ENCODE measurements at regions of chr17 and their contacts with region 1.

Region 1: DNA sequence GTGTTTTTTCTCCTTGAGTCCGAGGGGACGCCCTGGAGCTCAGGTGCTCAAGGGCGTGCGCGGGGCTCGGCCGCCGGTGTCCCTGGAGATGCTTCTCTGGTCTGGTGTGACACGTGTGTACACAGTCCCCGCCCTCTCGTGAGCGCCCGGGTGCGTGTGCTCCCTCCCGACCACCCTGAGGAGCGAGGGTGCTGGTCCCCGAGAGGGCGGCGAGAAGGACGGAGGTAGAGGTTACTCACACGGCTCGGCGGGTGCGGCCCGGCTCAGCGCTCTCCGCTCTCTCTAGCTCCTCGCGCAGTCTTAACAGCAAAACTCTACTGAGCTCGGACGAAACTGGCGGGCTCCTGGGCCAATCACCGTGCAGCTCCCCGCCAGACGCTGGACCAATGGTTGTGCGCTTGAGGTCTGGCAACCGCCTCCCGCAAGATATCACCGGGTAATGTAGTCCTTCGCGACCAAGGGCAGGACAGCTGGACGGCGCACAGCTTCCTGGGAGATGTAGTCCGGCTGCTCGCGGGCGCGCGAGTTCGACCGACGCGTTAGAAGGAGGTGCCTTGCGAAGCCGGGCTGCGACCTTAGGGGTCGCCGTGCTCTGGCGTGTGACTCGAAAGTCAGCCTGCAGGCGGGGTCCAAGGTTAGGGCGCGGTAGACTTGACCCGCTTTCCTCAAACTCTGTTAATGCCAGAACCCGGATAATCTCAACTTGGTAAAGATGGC is at the start of gene SLC25A19:
- DNase-seq: peak; percentile 98 to 99 (median 98)
- ATAC-seq: peak; percentile 99
- H3K4me3 ChIP-seq: peak within 1 kb of the TSS; percentile 87
- H3K27ac ChIP-seq: peak within 1 kb of the TSS; percentile 89
- H3K4me1 ChIP-seq: peaks cover 2 to 16% of the 10 kb centered on the region in 2 experiments; a peak in 2 of 5 replicates
- H3K27me3 ChIP-seq: no peaks in the 10 kb centered on the region
- CTCF ChIP-seq: peak; percentile 78 to 96 (median 85)
- EP300 ChIP-seq: no peak
- POLR2A ChIP-seq: peak; percentile 92
- RAD21 ChIP-seq: peak in 1 of 2 experiments; percentile 60; a peak in 3 of 4 replicates
- polyA plus RNA-seq, gene SLC25A19: 33.4 to 49.3 TPM

Region 2: GRCh38 chr17:75219815-75220214 is 69.5 kb before region 1 on chr17:
- CTCF ChIA-PET with region 1: no interaction called
- POLR2A ChIA-PET with region 1: no interaction called
- in situ Hi-C with region 1: no loop called
- intact Hi-C with region 1: no loop called
- DNase-seq: peak in 3 of 4 experiments; percentile 11 to 20 (median 20)
- ATAC-seq: peak; percentile 54
- H3K4me3 ChIP-seq: no peak overlapping the region
- H3K27ac ChIP-seq: no peak overlapping the region
- H3K4me1 ChIP-seq: no peaks in the 10 kb centered on the region
- H3K27me3 ChIP-seq: no peaks in the 10 kb centered on the region
- CTCF ChIP-seq: no peak
- EP300 ChIP-seq: no peak
- POLR2A ChIP-seq: 0 out of 2 replicates have a peak, but pooled peaks have one; percentile 21
- RAD21 ChIP-seq: no peak

Region 3: GRCh38 chr17:75261336-75262111 is 27.7 kb before region 1 on chr17 and contains the starts of genes GGA3 and MRPS7:
- CTCF ChIA-PET with region 1: no interaction called
- POLR2A ChIA-PET with region 1: interaction called, 12 read pairs
- in situ Hi-C with region 1: no loop called
- intact Hi-C with region 1: no loop called
- DNase-seq: peak; percentile 86 to 97 (median 94)
- ATAC-seq: peak; percentile 96
- H3K4me3 ChIP-seq: peak within 1 kb of the TSS; percentile 91
- H3K27ac ChIP-seq: peak within 1 kb of the TSS; percentile 93
- H3K4me1 ChIP-seq: peaks cover 20 to 23% of the 10 kb centered on the region in 2 experiments; a peak in 4 of 5 replicates
- H3K27me3 ChIP-seq: no peaks in the 10 kb centered on the region
- CTCF ChIP-seq: peak in 1 of 3 experiments; percentile 14; a peak in 2 of 6 replicates
- EP300 ChIP-seq: no peak
- POLR2A ChIP-seq: peak; percentile 95
- RAD21 ChIP-seq: 0 out of 4 replicates have a peak, but pooled peaks have one; percentile 2 to 16
- polyA plus RNA-seq, gene GGA3: 5.7 to 6.3 TPM
- polyA plus RNA-seq, gene MRPS7: 236 to 244 TPM

Region 4: GRCh38 chr17:75271233-75271954 is 17.9 kb before region 1 on chr17:
- CTCF ChIA-PET with region 1: no interaction called
- POLR2A ChIA-PET with region 1: interaction called, 43 read pairs
- in situ Hi-C with region 1: no loop called
- intact Hi-C with region 1: loop called (anchors 2 kb)
- DNase-seq: peak; percentile 89 to 96 (median 92)
- ATAC-seq: peak; percentile 71
- H3K4me3 ChIP-seq: peak overlapping the region; percentile 97
- H3K27ac ChIP-seq: peak overlapping the region; percentile 93
- H3K4me1 ChIP-seq: peaks cover 30 to 59% of the 10 kb centered on the region in 2 experiments; a peak in 4 of 5 replicates
- H3K27me3 ChIP-seq: no peaks in the 10 kb centered on the region
- CTCF ChIP-seq: peak; percentile 60 to 91 (median 83)
- EP300 ChIP-seq: no peak
- POLR2A ChIP-seq: peak; percentile 73; the same call in 1 of the 2 replicates
- RAD21 ChIP-seq: peak; percentile 13 to 64; a peak in 2 of 4 replicates

Region 5: DNA sequence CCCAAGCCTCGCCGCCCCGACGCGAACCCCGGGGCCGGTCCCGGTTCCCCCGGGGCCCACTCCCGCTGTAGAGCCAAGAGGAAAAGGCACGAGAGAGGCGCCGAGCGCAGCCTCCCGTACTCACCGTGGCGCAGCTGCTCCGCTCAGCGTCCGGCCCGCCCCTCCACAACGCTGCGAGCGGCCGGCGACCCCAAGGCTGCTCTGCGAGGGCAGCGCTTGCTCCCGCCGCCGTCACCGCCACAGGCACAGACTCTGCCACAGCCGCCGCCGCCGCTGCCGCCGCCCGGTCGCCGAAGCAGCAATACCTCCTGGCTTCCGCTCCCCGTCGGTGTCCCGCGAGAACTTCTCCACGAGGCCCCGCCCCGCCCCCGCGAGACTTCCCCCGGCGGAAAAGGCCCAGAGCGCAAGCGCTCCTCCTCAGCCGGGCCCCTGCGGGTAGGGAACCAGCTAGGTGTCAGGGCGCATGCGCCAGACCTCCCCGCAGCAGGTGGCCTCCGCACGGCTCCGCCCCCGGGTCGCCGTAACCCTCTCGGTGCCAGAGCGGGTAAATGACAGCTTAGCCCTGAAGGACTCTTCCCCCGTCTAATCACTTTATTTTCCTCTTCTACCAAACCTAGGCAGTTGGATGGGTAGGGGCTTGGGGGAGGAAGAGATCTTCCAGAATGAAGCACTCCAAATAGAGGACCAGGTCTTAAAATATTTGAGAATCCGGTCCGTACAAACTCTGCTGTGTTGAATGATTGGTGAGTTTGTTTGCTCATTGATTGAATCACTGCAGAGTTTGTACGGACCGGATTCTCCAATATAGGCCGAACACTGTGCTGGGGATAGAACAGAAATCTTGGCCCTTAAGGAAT is 116.3 kb after region 1 on chr17 and contains the start of gene GRB2:
- CTCF ChIA-PET with region 1: interaction called, 3 read pairs
- POLR2A ChIA-PET with region 1: interaction called, 3 read pairs
- in situ Hi-C with region 1: no loop called
- intact Hi-C with region 1: loop called (anchors 2 kb)
- DNase-seq: peak; percentile 98 to 100 (median 100)
- ATAC-seq: peak; percentile 95
- H3K4me3 ChIP-seq: peak within 1 kb of the TSS; percentile 90
- H3K27ac ChIP-seq: peak within 1 kb of the TSS; percentile 84
- H3K4me1 ChIP-seq: peaks cover 12 to 15% of the 10 kb centered on the region in 2 experiments; a peak in 3 of 5 replicates
- H3K27me3 ChIP-seq: no peaks in the 10 kb centered on the region; a peak in 1 of 5 replicates
- CTCF ChIP-seq: no peak
- EP300 ChIP-seq: no peak
- POLR2A ChIP-seq: peak; percentile 90
- RAD21 ChIP-seq: no peak
- polyA plus RNA-seq, gene GRB2: 57.2 to 69.1 TPM

Region 6: GRCh38 chr17:75412455-75413317 is 123.4 kb after region 1 on chr17:
- CTCF ChIA-PET with region 1: interaction called, 23 read pairs
- POLR2A ChIA-PET with region 1: interaction called, 3 read pairs
- in situ Hi-C with region 1: no loop called
- intact Hi-C with region 1: loop called (anchors 1 kb)
- DNase-seq: peak; percentile 69 to 84 (median 72)
- ATAC-seq: peak; percentile 92
- H3K4me3 ChIP-seq: no peak overlapping the region
- H3K27ac ChIP-seq: no peak overlapping the region
- H3K4me1 ChIP-seq: no peaks in the 10 kb centered on the region
- H3K27me3 ChIP-seq: peaks cover 0 to 9% of the 10 kb centered on the region in 2 experiments; a peak in 2 of 5 replicates
- CTCF ChIP-seq: peak; percentile 88 to 92 (median 91)
- EP300 ChIP-seq: no peak
- POLR2A ChIP-seq: no peak
- RAD21 ChIP-seq: peak; percentile 94 to 98

Region 7: DNA sequence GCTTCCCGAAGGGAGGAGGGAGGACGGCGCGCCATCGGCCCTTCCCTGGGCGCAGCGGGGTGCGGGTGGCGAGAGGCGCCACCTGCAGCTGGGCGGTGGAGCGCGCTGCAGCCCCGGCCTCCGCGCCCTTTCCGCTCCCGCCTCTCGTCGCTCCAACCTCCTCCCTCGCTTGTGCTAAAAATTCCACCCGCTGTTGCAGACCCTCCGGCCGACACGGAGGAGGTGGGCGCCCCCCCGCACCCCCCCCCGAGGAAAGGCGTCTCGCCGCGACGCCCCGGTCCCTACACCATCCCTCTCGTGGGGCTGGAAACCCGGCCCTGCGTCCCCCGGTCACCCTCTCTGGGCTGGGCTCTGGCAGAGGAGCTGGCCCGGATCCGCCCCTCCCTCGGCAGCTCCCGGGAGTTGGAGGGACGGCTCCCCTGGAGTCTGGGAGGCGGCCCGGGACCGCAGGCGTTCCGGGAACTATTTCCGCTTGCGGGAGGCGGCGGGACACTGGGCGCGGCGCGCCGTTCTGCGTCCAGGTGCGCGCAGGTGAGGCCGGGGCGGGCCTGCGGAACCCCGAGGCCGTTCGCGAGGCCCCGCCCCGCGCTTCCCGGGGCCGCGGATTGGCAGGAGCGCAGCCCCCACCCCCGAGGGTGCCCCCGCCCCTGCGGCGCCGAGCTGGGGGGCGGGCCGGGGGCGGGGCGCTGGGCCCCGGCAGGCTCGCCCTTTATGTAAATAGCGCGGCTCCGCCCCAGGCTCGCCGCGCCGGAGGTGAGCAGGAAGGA is 235.9 kb after region 1 on chr17 and contains the start of gene LLGL2:
- CTCF ChIA-PET with region 1: no interaction called
- POLR2A ChIA-PET with region 1: no interaction called
- in situ Hi-C with region 1: no loop called
- intact Hi-C with region 1: loop called (anchors 10 kb)
- DNase-seq: peak; percentile 93 to 99 (median 96)
- ATAC-seq: peak; percentile 91
- H3K4me3 ChIP-seq: peak within 1 kb of the TSS; percentile 94
- H3K27ac ChIP-seq: peak within 1 kb of the TSS; percentile 55
- H3K4me1 ChIP-seq: peaks cover 12 to 35% of the 10 kb centered on the region in 2 experiments
- H3K27me3 ChIP-seq: no peaks in the 10 kb centered on the region
- CTCF ChIP-seq: peak; percentile 53 to 75 (median 66)
- EP300 ChIP-seq: no peak
- POLR2A ChIP-seq: peak; percentile 53
- RAD21 ChIP-seq: peak; percentile 47 to 64
- polyA plus RNA-seq, gene LLGL2: 0.32 to 1.3 TPM